Endothelial cell of umbilical vein (primary cell): ENCODE measurements at regions of chr21 and their contacts with region 1.

Region 1: GRCh38 chr21:39183237-39184007 is at the start of gene PSMG1:
- DNase-seq: peak; percentile 96
- H3K4me3 ChIP-seq: peak within 1 kb of the TSS; percentile 75 to 98 (median 92)
- H3K27ac ChIP-seq: peak within 1 kb of the TSS; percentile 70
- H3K4me1 ChIP-seq: peaks cover 18% of the 10 kb centered on the region
- H3K27me3 ChIP-seq: no peaks in the 10 kb centered on the region
- CTCF ChIP-seq: no peak
- POLR2A ChIP-seq: peak; percentile 85
- total RNA-seq, gene PSMG1: 66.3 and 75.9 TPM in 2 replicates

Region 2: DNA sequence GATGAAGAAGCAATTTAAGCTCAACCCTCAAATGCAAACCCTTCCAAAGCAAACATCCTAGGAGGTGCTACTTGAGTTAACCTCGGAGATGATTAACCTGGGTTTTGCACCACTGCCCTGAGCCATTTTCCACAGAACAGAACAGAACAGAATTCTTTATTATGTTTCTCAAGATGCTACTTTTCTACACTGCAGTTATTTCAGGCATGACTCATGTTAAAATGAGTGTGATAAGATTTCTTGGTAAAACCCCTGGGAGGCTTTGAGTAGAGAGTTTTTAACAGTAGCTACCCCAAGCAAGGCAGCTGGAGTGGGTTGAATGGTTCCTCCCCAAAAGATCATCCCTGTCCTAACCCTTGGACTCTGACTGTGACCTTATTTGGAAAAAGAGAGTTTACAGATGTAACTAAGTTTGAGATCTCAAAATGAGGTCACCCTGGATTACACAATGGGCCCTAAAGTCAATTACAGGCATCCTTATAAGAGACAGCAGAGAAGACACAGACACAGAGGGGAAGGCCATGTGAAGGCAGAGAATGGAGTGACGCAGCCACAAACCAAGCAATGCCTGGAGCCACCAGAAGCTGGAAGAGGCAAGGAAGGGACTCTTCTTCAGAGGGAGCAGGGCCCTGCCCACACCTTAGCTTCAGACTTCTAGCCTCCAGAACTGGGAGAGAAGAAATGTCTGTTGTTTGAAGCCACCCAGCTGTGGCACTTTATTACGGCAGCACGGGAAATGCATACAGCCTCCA is 224.3 kb before region 1 on chr21:
- CTCF ChIA-PET with region 1: no interaction called
- POLR2A ChIA-PET with region 1: no interaction called
- dilution Hi-C with region 1: no loop called
- intact Hi-C with region 1: no loop called
- DNase-seq: no peak
- H3K4me3 ChIP-seq: no peak overlapping the region
- H3K27ac ChIP-seq: no peak overlapping the region
- H3K4me1 ChIP-seq: no peaks in the 10 kb centered on the region
- H3K27me3 ChIP-seq: peaks cover 0 to 3% of the 10 kb centered on the region in 2 experiments
- CTCF ChIP-seq: no peak
- POLR2A ChIP-seq: no peak

Region 3: GRCh38 chr21:39379986-39380891 is 196.8 kb after region 1 on chr21:
- CTCF ChIA-PET with region 1: no interaction called
- POLR2A ChIA-PET with region 1: no interaction called
- dilution Hi-C with region 1: no loop called
- intact Hi-C with region 1: loop called (anchors 1 kb)
- DNase-seq: peak; percentile 95
- H3K4me3 ChIP-seq: peak overlapping the region; percentile 48 to 80 (median 78)
- H3K27ac ChIP-seq: peak overlapping the region; percentile 71
- H3K4me1 ChIP-seq: peaks cover 14% of the 10 kb centered on the region
- H3K27me3 ChIP-seq: peaks cover 3 to 5% of the 10 kb centered on the region in 2 experiments
- CTCF ChIP-seq: no peak
- POLR2A ChIP-seq: peak; percentile 86